ENCODE measurements at regions of chr6 and their contacts with region 1.

Region 1: GRCh38 chr6:149368065-149368464 is 32.0 kb upstream of the SUMO4 start:
- DNase-seq: no peak
- ATAC-seq: no peak

Region 2: GRCh38 chr6:149211046-149211571 is 157.0 kb before region 1 on chr6:
- intact Hi-C with region 1: no loop called
- DNase-seq: no peak
- ATAC-seq: no peak

Region 3: DNA sequence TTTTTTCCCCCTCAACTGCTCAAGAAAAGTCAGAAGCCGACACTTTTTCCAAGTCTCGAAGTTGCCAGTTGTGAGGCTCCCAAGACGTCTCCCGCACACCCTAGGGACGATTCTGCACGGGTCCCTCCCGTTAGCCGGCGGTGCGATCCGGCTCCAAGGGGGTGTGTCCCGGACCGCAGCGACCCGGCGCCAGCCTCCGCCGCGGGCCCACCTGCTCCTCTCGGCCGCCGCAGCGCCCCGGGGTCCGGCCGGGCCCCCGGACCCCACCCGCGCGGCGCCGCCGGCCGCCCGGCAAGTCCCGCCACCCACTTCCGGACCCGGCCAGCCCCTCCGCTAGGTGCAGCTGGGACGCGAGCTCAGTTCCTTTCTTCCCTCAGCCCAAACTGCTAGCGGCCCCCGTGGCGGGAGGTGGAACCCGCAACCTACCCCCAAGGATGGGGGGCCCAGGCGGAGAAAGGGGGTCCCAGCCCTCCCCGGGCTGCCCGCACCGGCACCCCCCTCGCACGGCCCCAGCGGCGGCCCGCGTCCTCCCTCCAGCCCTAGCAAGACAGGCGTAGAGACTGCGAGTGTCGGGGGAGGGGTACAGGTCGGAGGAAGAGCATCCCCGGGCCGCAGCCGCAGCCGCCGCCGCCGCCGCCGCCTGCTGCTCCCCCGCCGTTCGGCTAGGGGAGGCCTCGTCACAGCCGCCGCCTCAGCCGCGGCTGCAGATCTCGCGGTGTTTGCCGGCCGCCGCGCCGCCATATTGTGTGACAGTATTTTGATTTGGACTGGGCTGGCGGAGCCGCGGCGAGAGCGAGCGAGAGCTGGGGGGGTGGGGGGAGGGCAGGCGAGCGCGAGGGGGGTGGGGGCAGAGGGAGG is 51.0 kb before region 1 on chr6:
- intact Hi-C with region 1: loop called (anchors 5 kb)
- DNase-seq: peak; percentile 97
- ATAC-seq: peak; percentile 95

Region 4: GRCh38 chr6:149473080-149474052 is 105.3 kb after region 1 on chr6:
- intact Hi-C with region 1: no loop called
- DNase-seq: no peak
- ATAC-seq: peak; percentile 49

Region 5: GRCh38 chr6:149660028-149660427 is 292.0 kb after region 1 on chr6:
- intact Hi-C with region 1: no loop called
- DNase-seq: no peak
- ATAC-seq: no peak